Right ventricle myocardium inferior (tissue), 1 donor: ENCODE measurements at regions of chr5 and their contacts with region 1.

Region 1: GRCh38 chr5:124649491-124650146 is 96.8 kb downstream of the ZNF608 start:
- DNase-seq: peak; percentile 93
- ATAC-seq: peak; percentile 43

Region 2: GRCh38 chr5:124536333-124536732 is 113.3 kb before region 1 on chr5:
- intact Hi-C with region 1: loop called (anchors 5 kb)
- DNase-seq: no peak
- ATAC-seq: no peak